ENCODE measurements at regions of chr15 and their contacts with region 1.

Region 1: DNA sequence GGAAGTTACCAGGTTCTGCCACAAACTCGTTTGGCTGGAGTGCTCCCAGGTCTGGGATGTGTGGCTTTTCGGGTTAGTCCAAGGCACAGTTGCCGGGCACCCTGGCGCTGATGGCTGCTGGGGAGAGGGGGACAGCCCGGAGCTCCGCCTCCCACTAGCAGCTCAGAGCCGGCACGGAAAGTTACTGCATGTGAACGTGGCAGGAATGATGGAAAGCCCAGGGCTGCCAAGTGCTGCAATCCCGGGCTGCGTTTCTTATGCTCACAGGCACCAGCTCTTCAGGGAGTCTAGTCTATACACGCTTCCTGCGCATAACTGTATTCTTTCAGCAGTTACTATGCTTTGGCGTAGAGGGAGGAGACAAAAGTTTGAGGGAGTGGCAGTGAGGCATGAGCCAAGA is 141.8 kb upstream of the ICE2 start:
- DNase-seq: no peak
- ATAC-seq: no peak
- H3K4me3 ChIP-seq: no peak overlapping the region
- H3K27ac ChIP-seq: no peak overlapping the region
- H3K4me1 ChIP-seq: no peaks in the 10 kb centered on the region
- CTCF ChIP-seq: no peak
- EP300 ChIP-seq: no peak
- POLR2A ChIP-seq: no peak
- RAD21 ChIP-seq: no peak

Region 2: GRCh38 chr15:60101416-60101941 is 519.2 kb before region 1 on chr15:
- CTCF ChIA-PET with region 1: no interaction called
- POLR2A ChIA-PET with region 1: no interaction called
- DNase-seq: no peak
- ATAC-seq: no peak
- H3K4me3 ChIP-seq: no peak overlapping the region
- H3K27ac ChIP-seq: no peak overlapping the region
- H3K4me1 ChIP-seq: no peaks in the 10 kb centered on the region
- CTCF ChIP-seq: no peak
- EP300 ChIP-seq: no peak
- POLR2A ChIP-seq: no peak
- RAD21 ChIP-seq: no peak

Region 3: GRCh38 chr15:60631620-60632019 is 10.9 kb after region 1 on chr15:
- CTCF ChIA-PET with region 1: interaction called, 10 read pairs
- POLR2A ChIA-PET with region 1: no interaction called
- DNase-seq: no peak
- ATAC-seq: no peak
- H3K4me3 ChIP-seq: no peak overlapping the region
- H3K27ac ChIP-seq: no peak overlapping the region
- H3K4me1 ChIP-seq: no peaks in the 10 kb centered on the region
- CTCF ChIP-seq: no peak
- EP300 ChIP-seq: no peak
- POLR2A ChIP-seq: no peak
- RAD21 ChIP-seq: no peak